ENCODE measurements at regions of chr1 and their contacts with region 1.

Region 1: DNA sequence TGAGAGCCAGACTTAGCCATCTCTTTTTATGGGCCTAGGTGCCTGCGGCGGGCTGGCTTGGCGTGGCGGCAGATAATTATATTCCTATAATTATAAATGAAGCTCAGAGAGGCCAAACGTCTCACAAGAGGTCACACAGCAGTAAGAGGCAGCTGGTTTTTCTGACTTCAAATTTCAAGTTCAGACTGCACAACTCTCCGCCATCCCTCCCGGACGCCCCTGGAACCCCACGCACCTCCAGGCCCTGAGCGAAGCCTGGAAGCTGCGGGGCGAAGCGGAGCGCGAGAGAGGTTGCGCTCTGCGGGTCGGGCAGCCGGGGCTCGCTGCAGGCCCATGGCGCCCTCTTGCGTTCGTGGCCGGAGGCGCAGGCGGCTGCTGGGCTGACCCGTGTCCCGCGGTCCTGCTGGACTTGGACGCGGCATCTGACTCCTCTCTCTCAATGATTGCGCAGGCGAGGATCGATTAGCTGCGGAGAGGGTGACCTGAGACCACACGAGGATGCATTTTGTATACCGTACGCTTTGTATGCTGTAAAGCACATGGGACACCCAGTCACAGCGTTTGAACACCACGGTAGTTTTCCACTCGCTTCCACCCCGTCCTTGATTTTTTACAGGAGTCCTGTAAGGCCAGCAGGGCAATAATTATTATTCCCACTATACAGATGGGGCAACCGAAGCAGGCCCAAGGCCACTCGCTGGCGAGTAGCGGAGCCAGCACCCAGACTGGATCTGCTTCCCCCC is 272.7 kb downstream of the FOXD2 start:
- DNase-seq: no peak
- H3K4me3 ChIP-seq: no peak overlapping the region
- H3K27ac ChIP-seq: no peak overlapping the region
- H3K27me3 ChIP-seq: peaks cover 64% of the 10 kb centered on the region
- CTCF ChIP-seq: peak; percentile 94

Region 2: GRCh38 chr1:47424336-47424982 is 286.0 kb before region 1 on chr1:
- CTCF ChIA-PET with region 1: interaction called, 12 read pairs
- POLR2A ChIA-PET with region 1: no interaction called
- DNase-seq: no peak
- H3K4me3 ChIP-seq: no peak overlapping the region
- H3K27ac ChIP-seq: no peak overlapping the region
- H3K27me3 ChIP-seq: peaks cover 1% of the 10 kb centered on the region
- CTCF ChIP-seq: peak; percentile 91

Region 3: DNA sequence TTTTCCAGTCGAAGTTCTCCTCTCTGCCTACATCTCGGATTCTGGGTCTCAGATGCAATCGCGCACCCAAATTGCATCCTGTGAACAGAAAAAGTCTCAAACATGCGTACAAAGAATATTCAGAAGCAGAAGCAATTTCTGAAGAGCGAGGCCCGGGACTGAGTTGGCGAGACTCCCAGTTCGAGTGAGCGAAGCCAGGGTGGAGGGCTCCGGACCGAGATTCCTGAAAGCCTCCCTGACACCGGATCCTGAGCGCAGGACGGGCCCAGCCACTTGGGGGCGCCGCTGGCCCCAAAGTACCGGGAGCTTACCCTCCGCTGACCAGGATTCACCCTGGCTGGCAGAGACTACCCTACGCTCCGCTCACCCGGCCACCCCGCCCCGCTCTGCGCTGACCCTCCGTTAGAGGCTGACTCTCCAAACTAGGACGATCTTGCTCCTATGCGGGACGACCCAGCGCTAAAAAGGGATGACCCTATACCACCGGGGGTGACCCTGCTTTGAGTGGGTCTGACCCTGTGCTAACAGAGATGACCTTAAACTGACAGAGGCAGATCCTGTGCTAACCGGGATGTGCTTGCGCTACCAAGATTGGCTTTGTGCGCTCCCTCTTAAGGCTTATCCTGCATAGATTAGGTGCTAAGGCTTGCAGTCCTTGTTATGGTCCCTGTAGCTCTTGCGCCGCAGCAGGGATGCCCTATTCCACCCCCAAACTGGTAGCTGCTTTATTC is 260.5 kb before region 1 on chr1:
- CTCF ChIA-PET with region 1: interaction called, 14 read pairs
- POLR2A ChIA-PET with region 1: no interaction called
- DNase-seq: no peak
- H3K4me3 ChIP-seq: no peak overlapping the region
- H3K27ac ChIP-seq: no peak overlapping the region
- H3K27me3 ChIP-seq: peaks cover 64% of the 10 kb centered on the region
- CTCF ChIP-seq: peak; percentile 45

Region 4: GRCh38 chr1:47765236-47765635 is 54.7 kb after region 1 on chr1:
- CTCF ChIA-PET with region 1: no interaction called
- POLR2A ChIA-PET with region 1: no interaction called
- DNase-seq: no peak
- H3K4me3 ChIP-seq: no peak overlapping the region
- H3K27ac ChIP-seq: no peak overlapping the region
- H3K27me3 ChIP-seq: no peaks in the 10 kb centered on the region
- CTCF ChIP-seq: no peak

Measured in AG04450 (cell line).